Adrenal gland (tissue), 19 donors: ENCODE measurements at regions of chr2 and their contacts with region 1.

Region 1: DNA sequence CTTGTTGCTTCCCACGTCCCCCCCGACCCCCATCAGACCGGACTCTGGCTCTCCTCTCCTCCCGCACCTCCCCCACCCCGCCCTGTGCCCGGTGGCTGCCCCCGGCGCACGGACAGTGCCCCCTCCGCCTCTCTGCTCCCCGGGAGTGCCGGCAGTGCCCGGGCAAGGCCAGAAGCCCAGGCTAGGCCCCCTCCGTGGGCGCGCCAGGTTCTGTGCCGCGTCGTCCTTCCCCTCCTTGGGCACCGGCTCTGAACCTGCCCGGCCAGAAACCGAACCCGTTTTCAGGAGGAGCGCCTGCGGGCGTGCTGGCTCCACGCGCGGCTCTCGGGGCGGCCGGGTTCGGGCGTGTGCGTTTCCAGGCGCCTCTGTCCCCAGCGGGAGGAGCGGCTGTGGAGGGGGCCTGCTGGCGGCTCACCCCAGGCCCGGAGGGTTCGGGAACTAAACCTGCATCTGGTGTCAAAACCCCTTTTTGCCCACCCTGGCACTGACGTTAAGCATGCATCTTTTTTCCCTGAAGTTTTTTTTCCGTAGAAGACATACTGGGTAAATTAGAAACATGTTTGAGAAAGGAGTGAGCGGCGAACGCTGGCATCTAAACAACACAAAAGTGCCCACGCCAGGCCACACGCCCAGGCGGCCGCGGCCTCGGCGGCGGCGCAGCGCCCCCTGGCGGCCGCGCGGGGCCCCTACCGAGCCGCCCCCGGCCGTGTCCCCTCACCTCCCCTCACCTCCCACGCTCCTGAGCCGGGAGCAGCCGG is 123.9 kb upstream of the SLC1A4 start:
- DNase-seq: peak; percentile 62 to 85 (median 74)
- H3K4me3 ChIP-seq: peak overlapping the region in 2 of 4 donors; percentile 61 to 68
- H3K27ac ChIP-seq: peak overlapping the region in 4 of 5 donors; percentile 76 to 89 (median 82)
- H3K4me1 ChIP-seq: peaks cover 6 to 7% of the 10 kb centered on the region in 2 donors
- H3K27me3 ChIP-seq: no peaks in the 10 kb centered on the region
- CTCF ChIP-seq: peak in 5 of 6 experiments; percentile 17 to 97 (median 96)
- POLR2A ChIP-seq: peak in 1 of 2 donors; percentile 32

Region 2: GRCh38 chr2:64523666-64524603 is 341.3 kb before region 1 on chr2 and contains the start of gene AFTPH:
- intact Hi-C with region 1: loop called (anchors 5 to 10 kb)
- DNase-seq: peak; percentile 99 to 100 (median 99)
- H3K4me3 ChIP-seq: peak within 1 kb of the TSS; percentile 63 to 84 (median 72)
- H3K27ac ChIP-seq: peak within 1 kb of the TSS; percentile 73 to 96 (median 95)
- H3K4me1 ChIP-seq: peaks cover 3 to 24% of the 10 kb centered on the region in 2 donors
- H3K27me3 ChIP-seq: no peaks in the 10 kb centered on the region
- CTCF ChIP-seq: peak in 2 of 6 experiments; percentile 3 to 4
- POLR2A ChIP-seq: peak; percentile 71 to 94
- total RNA-seq, gene AFTPH: 25.7 to 42.3 (median 34.2) TPM

Region 3: GRCh38 chr2:64595397-64596160 is 269.7 kb before region 1 on chr2:
- intact Hi-C with region 1: loop called (anchors 5 kb)
- DNase-seq: no peak
- H3K4me3 ChIP-seq: no peak overlapping the region
- H3K27ac ChIP-seq: no peak overlapping the region
- H3K4me1 ChIP-seq: peaks cover 0 to 9% of the 10 kb centered on the region in 2 donors
- H3K27me3 ChIP-seq: no peaks in the 10 kb centered on the region
- CTCF ChIP-seq: peak in 1 of 6 experiments; percentile 15
- POLR2A ChIP-seq: no peak

Region 4: GRCh38 chr2:64653349-64654062 is 211.7 kb before region 1 on chr2 and contains the start of gene SERTAD2:
- intact Hi-C with region 1: loop called in 1 of 2 experiments (anchors 5 kb)
- DNase-seq: peak; percentile 87 to 93 (median 90)
- H3K4me3 ChIP-seq: peak within 1 kb of the TSS; percentile 43 to 97 (median 76)
- H3K27ac ChIP-seq: peak within 1 kb of the TSS; percentile 97 to 100 (median 99)
- H3K4me1 ChIP-seq: peaks cover 24 to 36% of the 10 kb centered on the region in 2 donors
- H3K27me3 ChIP-seq: no peaks in the 10 kb centered on the region
- CTCF ChIP-seq: peak in 3 of 6 experiments; percentile 1 to 17 (median 13)
- POLR2A ChIP-seq: peak; percentile 59 to 95
- total RNA-seq, gene SERTAD2: 5.8 to 15.8 (median 12.4) TPM

Region 5: GRCh38 chr2:64767670-64768468 is 97.4 kb before region 1 on chr2:
- intact Hi-C with region 1: loop called in 1 of 2 experiments (anchors 10 kb)
- DNase-seq: peak; percentile 88 to 97 (median 93)
- H3K4me3 ChIP-seq: peak overlapping the region; percentile 43 to 94 (median 54)
- H3K27ac ChIP-seq: peak overlapping the region; percentile 82 to 99 (median 94)
- H3K4me1 ChIP-seq: peaks cover 7 to 10% of the 10 kb centered on the region in 2 donors
- H3K27me3 ChIP-seq: no peaks in the 10 kb centered on the region
- CTCF ChIP-seq: no peak
- POLR2A ChIP-seq: peak; percentile 76 to 97

Region 6: GRCh38 chr2:65164426-65164891 is 299.2 kb after region 1 on chr2:
- intact Hi-C with region 1: no loop called
- DNase-seq: peak in 3 of 7 donors; percentile 21 to 54 (median 25)
- H3K4me3 ChIP-seq: no peak overlapping the region
- H3K27ac ChIP-seq: peak overlapping the region in 3 of 5 donors; percentile 0 to 71 (median 27)
- H3K4me1 ChIP-seq: peaks cover 0 to 6% of the 10 kb centered on the region in 2 donors
- H3K27me3 ChIP-seq: no peaks in the 10 kb centered on the region
- CTCF ChIP-seq: no peak
- POLR2A ChIP-seq: no peak